HepG2 (cell line): ENCODE measurements at regions of chr9 and their contacts with region 1.

Region 1: DNA sequence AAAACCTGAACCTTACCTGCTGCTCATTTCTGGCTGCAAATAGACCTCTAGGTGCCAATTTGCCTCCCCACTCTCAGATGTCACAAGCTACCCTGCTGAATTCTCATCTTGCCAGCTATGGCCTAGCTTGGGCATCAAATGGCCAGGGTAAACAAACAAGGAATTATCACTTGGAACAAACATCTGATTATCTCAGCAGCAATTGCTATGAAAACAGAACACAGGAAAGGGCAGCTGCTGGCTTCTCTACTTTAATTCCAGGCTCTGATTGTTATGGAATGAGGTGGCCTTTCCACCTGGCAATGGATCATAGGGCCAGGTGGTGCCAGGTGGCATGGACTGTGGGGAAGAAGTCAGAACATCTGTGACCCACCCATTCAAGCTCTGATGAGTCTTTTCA is 505.1 kb downstream of the TLR4 start:
- DNase-seq: no peak
- ATAC-seq: no peak
- H3K4me3 ChIP-seq: no peak overlapping the region
- H3K27ac ChIP-seq: no peak overlapping the region
- H3K4me1 ChIP-seq: no peaks in the 10 kb centered on the region
- H3K27me3 ChIP-seq: no peaks in the 10 kb centered on the region
- CTCF ChIP-seq: no peak
- EP300 ChIP-seq: no peak
- POLR2A ChIP-seq: no peak
- RAD21 ChIP-seq: no peak

Region 2: DNA sequence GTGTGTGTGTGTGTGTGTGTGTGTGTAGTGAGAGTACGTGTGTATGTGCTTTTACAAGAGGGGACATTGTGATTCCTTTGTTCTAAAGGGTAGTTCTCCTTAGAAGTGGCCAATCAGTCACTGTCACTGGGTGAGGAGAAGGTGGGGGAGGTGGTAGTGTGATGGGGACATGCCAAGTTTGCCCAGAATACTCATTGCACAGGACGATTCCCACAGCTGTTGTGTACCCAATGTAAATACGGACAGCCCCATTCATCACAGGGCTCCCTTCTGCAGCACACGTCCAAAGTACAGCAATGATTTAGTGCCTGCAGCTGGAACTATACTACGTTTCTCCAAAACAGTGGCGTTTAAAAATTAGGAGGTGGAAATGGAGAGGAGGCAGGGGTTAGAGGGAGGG is 217.3 kb before region 1 on chr9:
- CTCF ChIA-PET with region 1: no interaction called
- POLR2A ChIA-PET with region 1: no interaction called
- in situ Hi-C with region 1: no loop called
- intact Hi-C with region 1: no loop called
- DNase-seq: no peak
- ATAC-seq: no peak
- H3K4me3 ChIP-seq: no peak overlapping the region
- H3K27ac ChIP-seq: no peak overlapping the region
- H3K4me1 ChIP-seq: no peaks in the 10 kb centered on the region
- H3K27me3 ChIP-seq: no peaks in the 10 kb centered on the region
- CTCF ChIP-seq: no peak
- EP300 ChIP-seq: no peak
- POLR2A ChIP-seq: no peak
- RAD21 ChIP-seq: no peak

Region 3: GRCh38 chr9:118162711-118163110 is 46.6 kb before region 1 on chr9:
- CTCF ChIA-PET with region 1: no interaction called
- POLR2A ChIA-PET with region 1: no interaction called
- in situ Hi-C with region 1: no loop called
- intact Hi-C with region 1: no loop called
- DNase-seq: no peak
- ATAC-seq: no peak
- H3K4me3 ChIP-seq: no peak overlapping the region
- H3K27ac ChIP-seq: no peak overlapping the region
- H3K4me1 ChIP-seq: no peaks in the 10 kb centered on the region
- H3K27me3 ChIP-seq: no peaks in the 10 kb centered on the region
- CTCF ChIP-seq: no peak
- EP300 ChIP-seq: no peak
- POLR2A ChIP-seq: no peak
- RAD21 ChIP-seq: no peak

Region 4: GRCh38 chr9:118222375-118222774 is 13.0 kb after region 1 on chr9:
- CTCF ChIA-PET with region 1: no interaction called
- POLR2A ChIA-PET with region 1: no interaction called
- in situ Hi-C with region 1: no loop called
- intact Hi-C with region 1: no loop called
- DNase-seq: no peak
- ATAC-seq: no peak
- H3K4me3 ChIP-seq: no peak overlapping the region
- H3K27ac ChIP-seq: no peak overlapping the region
- H3K4me1 ChIP-seq: no peaks in the 10 kb centered on the region
- H3K27me3 ChIP-seq: no peaks in the 10 kb centered on the region
- CTCF ChIP-seq: no peak
- EP300 ChIP-seq: no peak
- POLR2A ChIP-seq: no peak
- RAD21 ChIP-seq: no peak

Region 5: DNA sequence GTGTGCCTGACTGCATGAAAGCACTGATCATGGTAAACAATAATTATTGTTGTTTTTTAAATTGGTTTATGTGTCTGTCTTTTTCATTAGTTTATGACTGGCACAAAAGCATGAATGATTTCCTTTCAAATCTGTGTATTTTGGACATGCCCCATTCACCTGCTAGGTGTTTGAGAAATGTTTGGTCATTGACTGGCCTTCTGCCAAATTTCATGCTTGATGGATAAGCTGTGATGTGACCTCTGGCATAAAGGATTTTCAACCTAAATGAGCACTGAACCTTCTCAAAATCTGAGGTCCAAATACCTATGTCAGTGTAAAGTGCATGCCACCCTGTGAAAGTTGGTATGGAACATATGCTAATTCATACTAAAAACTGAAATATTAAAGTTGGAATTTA is 955.4 kb after region 1 on chr9:
- CTCF ChIA-PET with region 1: no interaction called
- POLR2A ChIA-PET with region 1: no interaction called
- in situ Hi-C with region 1: no loop called
- intact Hi-C with region 1: loop called (anchors 5 kb)
- DNase-seq: no peak
- ATAC-seq: no peak
- H3K4me3 ChIP-seq: no peak overlapping the region
- H3K27ac ChIP-seq: no peak overlapping the region
- H3K4me1 ChIP-seq: no peaks in the 10 kb centered on the region
- H3K27me3 ChIP-seq: no peaks in the 10 kb centered on the region
- CTCF ChIP-seq: no peak
- EP300 ChIP-seq: no peak
- POLR2A ChIP-seq: no peak
- RAD21 ChIP-seq: no peak